HEK293 (cell line): ENCODE measurements at regions of chr17 and their contacts with region 1.

Region 1: GRCh38 chr17:7351665-7352501 is at the start of gene KCTD11:
- H3K4me3 ChIP-seq: peak within 1 kb of the TSS; percentile 70
- H3K27ac ChIP-seq: peak within 1 kb of the TSS; percentile 90
- H3K4me1 ChIP-seq: peaks cover 14% of the 10 kb centered on the region
- CTCF ChIP-seq: peak; percentile 85

Region 2: DNA sequence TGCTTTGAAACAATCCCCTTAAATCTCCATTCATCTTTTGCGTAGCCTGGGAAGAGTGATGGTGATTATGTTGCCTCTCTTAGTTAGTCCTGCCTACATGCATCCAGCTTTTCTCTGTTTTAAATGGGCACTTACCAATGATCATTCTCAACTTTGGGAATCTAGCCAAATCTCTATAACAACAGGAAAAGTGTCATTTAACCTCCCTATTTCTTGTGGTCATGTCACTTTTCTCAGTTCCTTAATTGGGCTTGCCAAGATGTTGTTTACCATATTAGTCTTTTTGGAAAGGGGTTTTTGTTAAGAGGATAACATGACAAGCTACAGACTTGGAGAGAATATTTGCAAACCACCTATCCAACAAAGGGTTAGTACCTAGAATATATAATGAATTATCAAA is 256.3 kb before region 1 on chr17:
- CTCF ChIA-PET with region 1: no interaction called
- POLR2A ChIA-PET with region 1: no interaction called
- H3K4me3 ChIP-seq: no peak overlapping the region
- H3K27ac ChIP-seq: no peak overlapping the region
- H3K4me1 ChIP-seq: no peaks in the 10 kb centered on the region
- CTCF ChIP-seq: no peak

Region 3: GRCh38 chr17:7156342-7156940 is 195.4 kb before region 1 on chr17:
- CTCF ChIA-PET with region 1: no interaction called
- POLR2A ChIA-PET with region 1: no interaction called
- H3K4me3 ChIP-seq: no peak overlapping the region
- H3K27ac ChIP-seq: no peak overlapping the region
- H3K4me1 ChIP-seq: no peaks in the 10 kb centered on the region
- CTCF ChIP-seq: no peak

Region 4: DNA sequence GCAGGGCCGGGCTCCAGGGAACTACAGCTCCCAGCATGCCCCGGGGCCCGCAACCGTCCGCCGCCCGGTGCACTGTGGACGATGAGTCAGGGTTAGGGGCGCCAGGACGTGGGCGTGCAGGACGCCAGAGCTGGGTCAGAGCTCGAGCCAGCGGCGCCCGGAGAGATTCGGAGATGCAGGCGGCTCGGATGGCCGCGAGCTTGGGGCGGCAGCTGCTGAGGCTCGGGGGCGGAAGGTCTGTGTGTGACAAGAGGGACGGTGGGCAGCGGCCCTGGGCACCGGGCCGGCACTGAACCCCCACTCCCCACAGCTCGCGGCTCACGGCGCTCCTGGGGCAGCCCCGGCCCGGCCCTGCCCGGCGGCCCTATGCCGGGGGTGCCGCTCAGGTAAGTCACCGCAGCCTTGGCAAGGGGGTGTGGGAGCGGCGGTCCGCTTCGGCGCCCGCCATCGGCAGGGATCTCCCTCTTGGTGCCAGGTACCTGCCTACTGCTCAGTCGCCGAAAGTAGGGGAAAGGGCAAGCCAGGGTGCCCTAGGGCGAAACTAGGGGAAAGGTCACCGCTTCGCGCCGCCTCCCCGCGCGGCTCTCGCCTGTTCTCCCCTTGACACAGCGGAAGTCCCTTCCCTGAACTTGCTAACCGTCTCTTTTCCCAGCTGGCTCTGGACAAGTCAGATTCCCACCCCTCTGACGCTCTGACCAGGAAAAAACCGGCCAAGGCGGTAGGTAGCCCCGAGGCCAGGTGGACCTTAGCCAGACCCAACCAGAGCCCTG is 131.9 kb before region 1 on chr17 and contains the starts of genes ACADVL and DLG4:
- CTCF ChIA-PET with region 1: interaction called, 10 read pairs
- POLR2A ChIA-PET with region 1: no interaction called
- H3K4me3 ChIP-seq: peak within 1 kb of the TSS; percentile 83
- H3K27ac ChIP-seq: peak within 1 kb of the TSS; percentile 83; the same call in 1 of the 2 replicates
- H3K4me1 ChIP-seq: peaks cover 7% of the 10 kb centered on the region
- CTCF ChIP-seq: no peak

Region 5: DNA sequence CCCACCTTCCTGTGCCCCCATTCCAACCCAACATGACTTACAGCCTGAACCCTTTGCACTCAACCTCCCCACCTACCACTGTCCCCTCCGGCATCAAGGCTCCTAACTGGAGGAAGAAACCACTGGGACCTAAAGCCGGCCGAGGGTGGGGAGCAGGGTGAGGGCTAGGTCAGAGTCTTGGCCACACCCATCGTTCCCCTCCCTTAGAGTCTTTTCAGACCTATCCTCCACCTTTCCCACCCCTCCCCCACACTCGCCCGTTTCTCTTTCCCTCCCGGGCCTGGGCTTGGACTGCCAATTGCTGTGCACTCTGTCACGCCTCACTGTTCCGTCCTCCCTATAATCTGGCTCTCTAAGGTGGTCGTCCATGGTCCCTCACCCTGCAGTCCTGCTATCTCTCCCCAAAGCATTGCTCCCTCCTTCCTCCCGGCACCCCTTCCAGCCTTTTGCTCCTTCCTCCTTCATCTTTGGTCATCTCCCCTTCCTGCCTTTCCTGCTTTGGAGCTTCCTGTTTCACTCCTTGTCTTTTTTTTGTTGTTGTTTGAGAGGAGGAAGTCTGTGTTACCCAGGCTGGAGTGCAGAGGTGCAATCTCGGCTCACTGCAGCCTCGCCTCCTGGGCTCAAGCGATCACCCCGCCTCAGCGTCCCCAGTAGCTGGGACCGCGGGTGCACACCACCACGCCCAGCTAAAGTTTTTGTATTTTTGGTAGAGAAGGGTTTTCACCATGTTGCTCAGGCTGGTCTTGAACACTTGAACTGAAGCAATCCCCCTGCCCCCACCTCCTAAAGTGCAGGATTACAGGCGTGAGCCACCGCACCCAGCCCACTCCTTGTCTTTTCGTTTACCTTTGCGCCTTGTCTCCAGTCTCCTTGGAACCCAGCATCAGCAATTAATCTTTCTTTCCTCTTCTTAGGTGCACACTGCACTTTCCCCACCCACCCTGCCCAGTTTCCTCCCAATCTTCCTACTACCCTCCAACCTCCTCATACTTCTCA is 88.5 kb before region 1 on chr17:
- CTCF ChIA-PET with region 1: no interaction called
- POLR2A ChIA-PET with region 1: no interaction called
- H3K4me3 ChIP-seq: peak overlapping the region; percentile 40
- H3K27ac ChIP-seq: peak overlapping the region; percentile 80
- H3K4me1 ChIP-seq: peaks cover 18% of the 10 kb centered on the region
- CTCF ChIP-seq: no peak

Region 6: DNA sequence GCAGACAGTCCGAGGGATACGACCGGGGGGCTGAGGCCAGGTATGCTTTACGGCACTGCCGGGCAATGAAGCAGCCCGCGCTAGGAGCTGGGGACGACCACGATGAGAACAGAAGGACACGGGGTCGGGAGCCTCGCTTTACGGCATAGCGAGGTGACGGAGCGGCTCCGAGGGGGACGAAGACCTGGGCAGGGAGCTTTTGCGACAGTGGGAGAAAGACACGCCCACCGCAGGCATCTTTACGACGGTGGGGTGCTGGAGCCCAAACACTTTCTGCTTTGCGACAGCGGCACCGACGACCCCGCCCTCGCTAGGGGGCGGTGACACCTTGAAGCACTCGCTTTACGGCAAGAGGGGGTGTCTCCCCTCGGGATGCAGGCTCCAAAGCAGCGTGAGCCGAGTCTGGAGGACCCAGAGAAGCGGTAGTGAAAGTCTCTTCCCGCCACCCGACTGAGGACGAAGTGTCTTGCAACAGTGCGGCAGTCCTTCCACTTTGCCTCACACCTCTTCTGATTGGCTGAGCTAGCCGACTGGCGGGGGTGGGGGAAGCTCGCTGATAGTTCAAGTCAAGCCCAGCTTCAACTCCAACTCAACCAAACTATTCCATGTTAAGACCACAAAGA is 22.4 kb before region 1 on chr17:
- CTCF ChIA-PET with region 1: interaction called, 50 read pairs
- POLR2A ChIA-PET with region 1: interaction called, 25 read pairs
- H3K4me3 ChIP-seq: peak overlapping the region; percentile 64
- H3K27ac ChIP-seq: peak overlapping the region; percentile 86
- H3K4me1 ChIP-seq: peaks cover 9% of the 10 kb centered on the region
- CTCF ChIP-seq: no peak

Region 7: GRCh38 chr17:7374353-7374752 is 22.5 kb after region 1 on chr17:
- CTCF ChIA-PET with region 1: interaction called, 21 read pairs
- POLR2A ChIA-PET with region 1: no interaction called
- H3K4me3 ChIP-seq: no peak overlapping the region
- H3K27ac ChIP-seq: no peak overlapping the region
- H3K4me1 ChIP-seq: no peaks in the 10 kb centered on the region
- CTCF ChIP-seq: no peak

Region 8: DNA sequence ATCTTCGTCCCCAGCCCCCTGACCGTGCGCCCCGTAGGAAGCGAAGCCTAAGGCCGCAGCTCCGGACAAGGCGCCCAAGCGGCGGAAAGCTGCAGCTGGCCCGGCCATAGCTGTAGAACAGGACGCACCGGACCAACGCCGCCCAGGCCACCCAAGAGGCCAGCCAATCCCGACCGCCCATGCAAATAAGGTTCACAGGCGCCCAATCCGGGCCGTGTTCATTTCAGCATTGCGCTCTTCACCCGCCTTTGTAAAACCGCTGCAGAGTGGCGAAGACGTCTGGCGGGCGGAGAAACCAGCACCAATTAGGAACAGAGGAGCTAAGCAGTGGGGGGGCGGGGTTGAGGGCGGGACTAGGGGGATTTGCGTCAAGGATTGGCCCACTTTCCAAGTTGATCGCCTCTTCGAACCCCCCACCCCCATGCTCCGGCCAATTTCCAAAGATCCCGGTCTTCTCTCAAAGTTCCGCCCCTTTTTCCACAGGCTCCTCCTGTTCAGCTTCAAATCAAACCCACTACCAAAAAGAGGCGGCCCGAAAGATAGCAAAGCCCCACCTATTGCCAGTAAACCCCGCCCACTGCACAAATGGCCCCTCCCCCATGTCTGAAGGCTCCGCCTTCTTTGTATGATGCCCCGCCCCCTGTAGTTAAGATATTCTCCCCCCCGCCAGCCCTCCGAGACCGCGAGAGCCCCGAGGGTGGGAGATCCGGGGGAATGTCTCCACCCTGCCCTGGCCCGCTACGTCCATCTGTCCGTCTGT is 52.3 kb after region 1 on chr17 and contains the start of gene TMEM256:
- CTCF ChIA-PET with region 1: interaction called, 21 read pairs
- POLR2A ChIA-PET with region 1: interaction called, 29 read pairs
- H3K4me3 ChIP-seq: peak within 1 kb of the TSS; percentile 83
- H3K27ac ChIP-seq: peak within 1 kb of the TSS; percentile 81
- H3K4me1 ChIP-seq: peaks cover 8% of the 10 kb centered on the region
- CTCF ChIP-seq: no peak

Region 9: DNA sequence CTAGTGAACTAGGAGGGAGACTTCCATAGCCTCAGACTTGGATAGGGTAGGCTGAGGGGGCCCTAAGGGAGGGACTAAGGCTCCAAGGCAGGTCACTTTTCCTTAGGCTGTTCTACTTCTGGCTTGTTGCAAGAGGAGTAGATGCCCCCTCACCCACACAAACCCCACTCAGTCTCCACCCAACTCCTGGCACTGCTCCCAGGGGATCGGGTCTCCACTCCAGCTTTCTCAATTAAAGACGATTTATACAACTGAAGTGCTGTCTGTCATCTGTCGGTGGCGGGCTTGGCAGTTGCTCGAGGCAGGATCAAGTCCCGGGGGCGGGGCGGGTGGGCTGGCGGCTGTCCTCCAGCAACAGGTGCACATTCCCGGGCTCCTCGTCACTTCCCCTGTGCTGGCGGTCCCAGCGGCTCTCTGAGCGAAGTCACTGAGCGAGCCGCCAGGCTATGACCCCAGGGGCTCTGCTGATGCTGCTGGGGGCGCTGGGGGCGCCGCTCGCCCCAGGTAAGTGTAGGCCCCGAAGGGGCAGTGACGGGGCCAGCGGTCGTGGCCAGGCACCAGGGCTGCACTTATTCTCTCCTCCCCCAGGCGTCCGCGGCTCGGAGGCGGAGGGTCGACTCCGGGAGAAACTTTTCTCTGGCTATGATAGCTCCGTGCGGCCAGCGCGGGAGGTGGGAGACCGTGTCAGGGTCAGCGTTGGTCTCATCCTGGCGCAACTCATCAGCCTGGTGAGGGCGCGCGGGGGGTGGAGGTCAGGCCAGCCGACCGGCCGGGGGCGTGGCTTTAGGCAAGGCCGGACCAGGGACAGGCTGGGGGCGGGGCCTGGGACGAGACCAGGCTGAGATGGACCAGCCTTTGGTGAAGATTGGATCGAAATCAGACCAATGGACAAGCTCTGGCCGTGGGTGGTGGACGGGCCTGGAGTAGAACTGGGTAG is 93.1 kb after region 1 on chr17 and contains the start of gene CHRNB1:
- CTCF ChIA-PET with region 1: interaction called, 18 read pairs
- POLR2A ChIA-PET with region 1: interaction called, 3 read pairs
- H3K4me3 ChIP-seq: peak within 1 kb of the TSS; percentile 57
- H3K27ac ChIP-seq: no peak within 1 kb of the TSS; the same call in 1 of the 2 replicates
- H3K4me1 ChIP-seq: peaks cover 19% of the 10 kb centered on the region
- CTCF ChIP-seq: peak; percentile 64

Region 10: GRCh38 chr17:7515911-7516610 is 164.2 kb after region 1 on chr17:
- CTCF ChIA-PET with region 1: interaction called, 17 read pairs
- POLR2A ChIA-PET with region 1: interaction called, 3 read pairs
- H3K4me3 ChIP-seq: no peak overlapping the region
- H3K27ac ChIP-seq: no peak overlapping the region
- H3K4me1 ChIP-seq: no peaks in the 10 kb centered on the region
- CTCF ChIP-seq: no peak